AG04449 (cell line): ENCODE measurements at regions of chr4 and their contacts with region 1.

Region 1: DNA sequence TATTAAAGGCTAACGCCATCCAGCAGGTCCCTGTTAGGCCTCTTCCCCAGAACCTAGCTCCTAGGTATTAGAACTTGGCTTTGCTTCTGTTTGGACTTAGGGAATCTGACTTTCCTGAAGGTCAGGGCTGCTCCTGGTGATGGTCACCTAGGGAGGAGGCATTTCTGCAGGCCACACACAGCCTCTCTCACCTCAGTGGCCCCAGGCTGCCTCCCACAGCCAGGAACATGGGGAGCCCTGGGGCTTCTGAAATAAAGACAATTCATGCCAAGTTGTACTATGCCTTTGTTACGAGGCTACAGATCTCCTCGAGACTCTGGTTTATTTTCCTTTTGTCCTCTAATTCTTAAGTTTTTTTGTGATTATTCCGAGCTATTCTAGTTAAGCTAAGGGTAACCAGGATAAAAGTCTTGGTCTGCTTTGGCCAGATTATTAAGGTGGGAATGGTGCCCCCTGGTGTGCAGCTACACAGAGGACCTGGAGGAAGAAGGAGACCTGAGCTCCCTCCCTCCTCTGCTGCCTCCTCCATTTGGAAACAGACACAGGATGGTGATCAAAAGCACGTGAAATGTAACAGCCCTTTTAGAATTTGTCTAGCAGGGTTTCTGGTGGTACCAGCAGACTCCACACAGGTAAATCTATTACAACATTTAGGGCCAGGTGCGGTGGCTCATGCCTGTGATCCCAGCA is 131.0 kb downstream of the DCLK2 start:
- DNase-seq: no peak
- H3K4me3 ChIP-seq: no peak overlapping the region
- CTCF ChIP-seq: peak; percentile 60

Region 2: DNA sequence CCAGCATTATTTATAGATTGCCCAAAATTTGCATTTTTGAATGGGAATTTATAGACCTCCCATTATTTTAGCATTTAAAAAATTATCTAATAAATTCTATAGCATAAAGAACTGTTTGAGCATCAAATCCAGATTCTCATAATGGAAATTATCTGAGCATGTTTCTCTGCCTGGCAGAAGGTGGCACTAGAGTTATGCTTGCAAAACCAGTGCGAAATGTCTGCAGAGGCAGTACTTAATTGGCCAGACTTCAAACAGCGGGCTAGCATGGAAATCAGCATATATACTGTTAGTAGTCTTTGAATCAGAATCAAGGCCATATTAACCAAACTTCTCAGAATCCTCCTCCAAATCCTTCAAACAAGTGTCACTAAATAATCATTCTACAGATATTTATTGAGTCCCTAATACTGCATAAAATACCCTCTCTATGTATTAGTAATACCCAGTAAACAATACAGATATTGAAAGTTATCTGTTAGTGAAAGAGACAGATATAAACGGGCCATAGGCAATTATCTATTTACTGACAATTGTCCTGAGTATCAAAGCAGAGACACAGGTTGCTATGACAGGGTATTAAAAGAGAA is 209.7 kb before region 1 on chr4:
- CTCF ChIA-PET with region 1: interaction called, 28 read pairs
- POLR2A ChIA-PET with region 1: interaction called, 4 read pairs
- DNase-seq: peak; percentile 70
- H3K4me3 ChIP-seq: no peak overlapping the region
- CTCF ChIP-seq: peak; percentile 81

Region 3: DNA sequence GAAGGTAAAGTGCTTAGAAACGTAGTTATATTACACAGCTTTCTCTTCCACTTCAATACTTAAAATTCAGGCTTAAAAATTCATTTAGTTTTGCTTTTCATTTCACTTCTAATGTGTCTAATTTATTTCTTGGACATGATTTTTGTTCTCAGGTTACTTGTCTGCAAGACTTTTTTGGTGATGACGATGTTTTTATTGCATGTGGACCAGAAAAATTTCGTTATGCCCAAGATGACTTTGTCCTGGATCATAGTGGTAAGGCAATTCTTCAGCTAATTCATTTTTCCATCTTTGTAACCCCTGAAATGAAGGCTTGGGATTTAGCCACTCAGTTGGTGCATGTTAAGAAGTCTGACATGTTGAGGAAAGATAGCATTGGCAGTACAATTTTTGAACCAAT is 16.3 kb before region 1 on chr4:
- CTCF ChIA-PET with region 1: interaction called, 16 read pairs
- POLR2A ChIA-PET with region 1: no interaction called
- DNase-seq: no peak
- H3K4me3 ChIP-seq: no peak overlapping the region
- CTCF ChIP-seq: no peak

Region 4: GRCh38 chr4:150199056-150199455 is 10.2 kb before region 1 on chr4:
- CTCF ChIA-PET with region 1: interaction called, 29 read pairs
- POLR2A ChIA-PET with region 1: no interaction called
- DNase-seq: no peak
- H3K4me3 ChIP-seq: no peak overlapping the region
- CTCF ChIP-seq: no peak